Activated CD4-positive, alpha-beta T cell treated with anti-CD3 and anti-CD28 coated beads, Interleukin-2, amount 10 ng/mL, durations not matched to agents 24 days and 14 days (primary cell): ENCODE measurements at regions of chr5 and their contacts with region 1.

Region 1: GRCh38 chr5:119385136-119385535 is 29.3 kb downstream of the TNFAIP8 start:
- DNase-seq: no peak
- H3K4me3 Mint-ChIP-seq: no peak overlapping the region
- H3K27ac Mint-ChIP-seq: peak overlapping the region; percentile 84
- H3K4me1 Mint-ChIP-seq: peaks cover 67% of the 10 kb centered on the region
- H3K27me3 Mint-ChIP-seq: no peaks in the 10 kb centered on the region

Region 2: GRCh38 chr5:118435131-118435530 is 950.0 kb before region 1 on chr5:
- intact Hi-C with region 1: no loop called
- DNase-seq: no peak
- H3K4me3 Mint-ChIP-seq: no peak overlapping the region
- H3K27ac Mint-ChIP-seq: no peak overlapping the region
- H3K4me1 Mint-ChIP-seq: no peaks in the 10 kb centered on the region
- H3K27me3 Mint-ChIP-seq: no peaks in the 10 kb centered on the region

Region 3: GRCh38 chr5:119166024-119166423 is 219.1 kb before region 1 on chr5:
- intact Hi-C with region 1: no loop called
- DNase-seq: no peak
- H3K4me3 Mint-ChIP-seq: no peak overlapping the region
- H3K27ac Mint-ChIP-seq: no peak overlapping the region
- H3K4me1 Mint-ChIP-seq: peaks cover 3% of the 10 kb centered on the region
- H3K27me3 Mint-ChIP-seq: no peaks in the 10 kb centered on the region

Region 4: DNA sequence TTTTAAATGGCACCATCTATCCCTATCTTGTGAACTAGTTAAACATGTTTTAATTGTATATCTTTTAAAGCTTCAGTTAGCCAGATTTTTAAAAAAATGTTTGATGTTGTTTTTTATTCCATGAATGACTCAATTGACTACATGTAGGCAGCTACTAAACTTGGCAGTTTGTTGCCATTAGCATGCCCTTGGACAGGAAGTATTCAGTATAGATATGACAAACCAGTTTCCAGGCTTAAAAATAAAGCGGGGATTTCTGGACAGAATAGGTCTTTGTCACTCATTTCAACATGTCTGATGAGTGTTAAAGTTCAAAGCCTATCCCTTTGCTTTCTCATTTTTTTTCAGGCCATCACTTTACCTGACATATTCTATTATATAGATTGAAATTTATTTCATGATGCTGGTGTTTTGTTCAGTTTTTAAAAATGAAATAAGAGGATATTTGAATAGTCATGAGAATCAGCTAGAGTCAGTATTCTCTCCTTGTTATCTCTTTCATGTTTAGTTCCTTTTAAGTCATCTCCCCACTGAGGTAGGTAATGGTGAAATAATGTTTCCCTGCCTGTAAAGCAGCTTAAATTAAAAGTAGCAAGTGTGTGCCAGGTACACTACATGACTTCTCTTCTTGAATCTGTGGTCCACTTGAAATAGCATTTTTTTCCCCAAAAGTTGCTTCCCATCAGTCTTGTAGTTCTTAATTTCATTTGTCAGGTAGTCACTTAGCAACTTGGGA is 17.5 kb before region 1 on chr5:
- intact Hi-C with region 1: loop called (anchors 2 kb)
- DNase-seq: peak; percentile 75
- H3K4me3 Mint-ChIP-seq: peak overlapping the region; percentile 78
- H3K27ac Mint-ChIP-seq: peak overlapping the region; percentile 96
- H3K4me1 Mint-ChIP-seq: peaks cover 69% of the 10 kb centered on the region
- H3K27me3 Mint-ChIP-seq: no peaks in the 10 kb centered on the region

Region 5: DNA sequence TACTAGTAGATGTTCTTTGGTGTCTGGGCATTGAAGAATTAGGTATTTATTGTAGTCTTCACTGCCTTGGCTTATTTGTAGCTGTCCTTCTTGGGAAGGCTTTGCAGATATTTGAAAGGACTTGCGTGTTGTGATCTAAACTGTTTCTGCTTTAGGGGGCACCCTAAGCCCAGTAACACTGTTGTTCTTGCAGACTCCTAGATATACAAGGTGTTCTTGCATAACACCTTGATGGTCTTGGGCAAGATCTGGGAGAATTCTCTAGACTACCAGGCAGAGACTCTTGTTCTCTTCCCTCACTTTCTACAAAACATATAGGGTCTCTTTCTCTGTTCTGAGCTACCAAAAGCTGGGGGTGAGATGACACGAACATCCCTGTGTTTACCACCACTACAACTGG is 423.3 kb after region 1 on chr5:
- intact Hi-C with region 1: no loop called
- DNase-seq: no peak
- H3K4me3 Mint-ChIP-seq: no peak overlapping the region
- H3K27ac Mint-ChIP-seq: no peak overlapping the region
- H3K4me1 Mint-ChIP-seq: no peaks in the 10 kb centered on the region
- H3K27me3 Mint-ChIP-seq: no peaks in the 10 kb centered on the region